Calu3 (cell line): ENCODE measurements at regions of chr12 and their contacts with region 1.

Region 1: GRCh38 chr12:10645910-10646309 is 27.9 kb downstream of the STYK1 start:
- DNase-seq: no peak
- H3K4me3 Mint-ChIP-seq: no peak overlapping the region
- H3K27ac Mint-ChIP-seq: no peak overlapping the region
- H3K4me1 Mint-ChIP-seq: no peaks in the 10 kb centered on the region
- H3K27me3 Mint-ChIP-seq: no peaks in the 10 kb centered on the region
- CTCF ChIP-seq: no peak

Region 2: DNA sequence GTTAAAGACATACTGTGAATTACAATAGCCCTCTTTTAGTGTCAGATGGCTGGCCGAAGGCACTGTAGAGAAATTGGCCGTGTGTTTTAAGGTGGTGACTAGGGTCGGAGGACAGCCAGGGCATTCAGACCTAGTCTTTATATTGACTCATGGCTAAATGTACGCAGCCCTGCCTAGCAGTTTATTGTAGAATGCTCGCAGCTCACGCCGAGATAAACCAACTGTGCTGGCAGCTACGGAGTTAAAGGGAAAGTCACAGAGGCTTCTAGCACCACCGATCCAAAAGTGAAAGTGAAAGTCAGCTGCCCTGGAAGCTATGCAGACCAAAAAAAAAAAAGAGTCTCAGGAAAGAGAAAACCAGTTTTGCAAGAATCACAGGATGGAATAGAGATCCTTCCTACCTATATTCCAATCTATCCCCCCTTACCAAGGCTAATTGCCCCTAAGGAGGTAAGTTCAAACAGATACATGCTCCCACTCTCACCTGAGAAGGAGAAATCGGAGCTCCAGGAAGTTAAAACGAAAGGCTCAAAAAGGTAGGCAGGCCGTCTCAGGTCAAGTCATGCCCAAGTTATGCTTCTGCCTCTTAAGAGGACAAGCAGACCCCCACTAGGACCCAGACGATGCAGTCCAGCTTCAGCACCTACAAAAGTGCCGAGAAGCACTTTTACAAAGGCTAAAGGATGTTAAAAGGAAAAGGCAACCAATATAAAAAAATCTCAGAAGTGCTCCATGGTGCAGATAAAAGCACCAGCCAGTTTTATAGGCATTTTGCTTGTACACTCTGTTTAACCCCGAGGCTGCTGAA is 280.9 kb before region 1 on chr12:
- CTCF ChIA-PET with region 1: no interaction called
- intact Hi-C with region 1: no loop called
- DNase-seq: peak; percentile 72
- H3K4me3 Mint-ChIP-seq: no peak overlapping the region
- H3K27ac Mint-ChIP-seq: no peak overlapping the region
- H3K4me1 Mint-ChIP-seq: peaks cover 49% of the 10 kb centered on the region
- H3K27me3 Mint-ChIP-seq: no peaks in the 10 kb centered on the region
- CTCF ChIP-seq: no peak

Region 3: GRCh38 chr12:10661338-10661737 is 15.4 kb after region 1 on chr12:
- CTCF ChIA-PET with region 1: no interaction called
- intact Hi-C with region 1: loop called (anchors 2 kb)
- DNase-seq: no peak
- H3K4me3 Mint-ChIP-seq: no peak overlapping the region
- H3K27ac Mint-ChIP-seq: no peak overlapping the region
- H3K4me1 Mint-ChIP-seq: peaks cover 9% of the 10 kb centered on the region
- H3K27me3 Mint-ChIP-seq: no peaks in the 10 kb centered on the region
- CTCF ChIP-seq: no peak

Region 4: DNA sequence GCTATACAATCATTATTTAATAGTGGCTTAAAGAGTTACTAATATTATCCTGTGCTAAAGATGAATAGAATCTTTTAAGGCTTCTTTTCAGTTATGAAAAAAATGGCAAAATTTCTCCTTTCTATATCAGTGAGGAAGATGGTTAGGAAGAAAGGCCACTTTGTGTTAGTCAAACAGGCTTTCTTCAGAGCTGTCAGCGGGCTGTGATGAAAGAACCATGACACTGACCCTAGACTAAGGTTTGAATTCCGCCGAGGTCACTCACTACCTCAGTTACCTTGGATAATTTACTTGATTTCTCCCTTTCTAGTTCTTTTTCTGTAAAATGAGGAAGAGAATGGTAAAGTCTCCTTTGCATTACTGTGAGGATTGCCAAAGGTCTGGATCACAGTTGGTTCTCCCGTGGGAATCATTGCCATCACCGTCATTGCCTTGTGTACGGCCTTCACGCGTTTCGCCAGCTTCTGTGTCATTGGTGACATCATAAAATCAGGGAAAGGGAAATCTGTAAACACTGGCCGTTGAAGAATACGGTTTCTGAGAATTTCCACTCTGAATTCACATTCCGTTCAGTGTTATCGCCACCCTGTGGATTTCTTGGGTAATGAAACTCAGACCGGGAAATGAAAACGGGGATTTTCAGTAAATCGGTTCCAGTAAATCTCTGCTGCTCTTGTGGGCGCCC is 103.9 kb after region 1 on chr12:
- CTCF ChIA-PET with region 1: no interaction called
- intact Hi-C with region 1: no loop called
- DNase-seq: peak; percentile 81
- H3K4me3 Mint-ChIP-seq: peak overlapping the region; percentile 57
- H3K27ac Mint-ChIP-seq: no peak overlapping the region
- H3K4me1 Mint-ChIP-seq: peaks cover 27% of the 10 kb centered on the region
- H3K27me3 Mint-ChIP-seq: no peaks in the 10 kb centered on the region
- CTCF ChIP-seq: peak; percentile 79